B cell (primary cell): ENCODE measurements at regions of chr16 and their contacts with region 1.

Region 1: GRCh38 chr16:1929578-1930337 is 11.5 kb upstream of the HS3ST6 start:
- DNase-seq: peak; percentile 93
- ATAC-seq: peak; percentile 99
- H3K4me3 ChIP-seq: peak overlapping the region in 4 of 5 experiments; percentile 43 to 65 (median 58)
- H3K4me3 Mint-ChIP-seq: peak overlapping the region; percentile 71
- H3K27ac ChIP-seq: peak overlapping the region in 1 of 2 donors; percentile 27
- H3K27ac Mint-ChIP-seq: peak overlapping the region; percentile 70
- H3K4me1 ChIP-seq: peaks cover 4 to 10% of the 10 kb centered on the region in 2 donors
- H3K4me1 Mint-ChIP-seq: peaks cover 4% of the 10 kb centered on the region
- H3K27me3 ChIP-seq: peaks cover 0 to 8% (median 2%) of the 10 kb centered on the region in 4 experiments
- H3K27me3 Mint-ChIP-seq: peaks cover under 1% of the 10 kb centered on the region
- CTCF ChIP-seq: peak; percentile 95

Region 2: GRCh38 chr16:1656808-1657617 is 272.7 kb before region 1 on chr16:
- CTCF ChIA-PET with region 1: no interaction called
- POLR2A ChIA-PET with region 1: no interaction called
- intact Hi-C with region 1: no loop called
- DNase-seq: no peak
- ATAC-seq: no peak
- H3K4me3 ChIP-seq: no peak overlapping the region
- H3K4me3 Mint-ChIP-seq: no peak overlapping the region
- H3K27ac ChIP-seq: no peak overlapping the region
- H3K27ac Mint-ChIP-seq: no peak overlapping the region
- H3K4me1 ChIP-seq: no peaks in the 10 kb centered on the region
- H3K4me1 Mint-ChIP-seq: peaks cover 2% of the 10 kb centered on the region
- H3K27me3 ChIP-seq: no peaks in the 10 kb centered on the region
- H3K27me3 Mint-ChIP-seq: no peaks in the 10 kb centered on the region
- CTCF ChIP-seq: no peak

Region 3: DNA sequence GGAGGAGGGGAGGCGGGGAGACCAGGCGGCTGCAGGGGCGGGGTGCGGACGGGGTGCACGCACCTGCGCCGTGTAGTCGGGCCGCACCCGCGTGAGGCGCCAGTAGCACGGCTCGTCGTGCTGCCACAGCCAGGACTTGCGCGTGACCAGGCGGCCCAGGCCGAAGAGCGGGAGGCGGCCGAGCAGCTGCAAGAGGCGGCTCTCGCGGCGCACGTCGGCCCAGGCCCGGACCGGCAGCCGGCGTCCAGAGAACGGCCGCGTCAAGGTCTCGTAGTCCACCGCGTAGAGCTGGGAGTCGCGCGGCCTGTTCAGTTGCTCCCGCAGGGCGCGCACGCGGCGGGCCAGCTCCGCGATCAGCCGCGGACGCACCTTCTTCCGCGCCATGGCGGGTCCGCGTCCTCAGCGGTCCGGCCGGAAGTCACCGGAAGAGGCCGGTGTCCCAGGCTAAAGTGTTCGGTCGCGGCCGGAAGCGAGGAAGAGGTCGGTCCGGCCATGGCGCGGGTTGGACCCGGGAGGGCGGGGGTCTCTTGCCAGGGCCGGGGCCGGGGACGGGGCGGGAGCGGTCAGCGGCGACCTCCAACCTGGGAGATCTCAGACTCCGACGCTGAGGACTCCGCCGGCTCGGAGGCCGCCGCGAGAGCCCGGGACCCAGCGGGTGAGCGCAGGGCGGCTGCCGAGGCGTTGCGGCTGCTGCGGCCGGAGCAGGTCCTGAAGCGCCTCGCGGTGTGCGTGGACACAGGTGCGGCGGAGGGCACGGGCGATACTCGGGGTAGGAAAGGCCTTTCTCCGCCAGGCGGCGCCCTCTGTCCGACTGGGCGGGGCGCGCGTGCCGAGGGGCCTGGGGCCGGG is 156.8 kb before region 1 on chr16 and contains the starts of genes EME2 and MRPS34:
- CTCF ChIA-PET with region 1: no interaction called
- POLR2A ChIA-PET with region 1: interaction called, 3 read pairs
- intact Hi-C with region 1: loop called (anchors 5 kb)
- DNase-seq: peak; percentile 89
- ATAC-seq: peak; percentile 61
- H3K4me3 ChIP-seq: peak within 1 kb of the TSS; percentile 53 to 87 (median 82)
- H3K4me3 Mint-ChIP-seq: peak within 1 kb of the TSS; percentile 95
- H3K27ac ChIP-seq: peak within 1 kb of the TSS; percentile 38 to 90
- H3K27ac Mint-ChIP-seq: peak within 1 kb of the TSS; percentile 97
- H3K4me1 ChIP-seq: peaks cover 22 to 40% of the 10 kb centered on the region in 2 donors
- H3K4me1 Mint-ChIP-seq: peaks cover 27% of the 10 kb centered on the region
- H3K27me3 ChIP-seq: no peaks in the 10 kb centered on the region
- H3K27me3 Mint-ChIP-seq: no peaks in the 10 kb centered on the region
- CTCF ChIP-seq: peak; percentile 88
- total RNA-seq, gene EME2: 42.5 and 43.9 TPM in 2 replicates
- total RNA-seq, gene MRPS34: 44.6 and 54.5 TPM in 2 replicates

Region 4: GRCh38 chr16:1863681-1864460 is 65.9 kb before region 1 on chr16:
- CTCF ChIA-PET with region 1: interaction called, 14 read pairs
- POLR2A ChIA-PET with region 1: no interaction called
- intact Hi-C with region 1: no loop called
- DNase-seq: peak; percentile 59
- ATAC-seq: no peak
- H3K4me3 ChIP-seq: no peak overlapping the region
- H3K4me3 Mint-ChIP-seq: no peak overlapping the region
- H3K27ac ChIP-seq: no peak overlapping the region
- H3K27ac Mint-ChIP-seq: no peak overlapping the region
- H3K4me1 ChIP-seq: no peaks in the 10 kb centered on the region
- H3K4me1 Mint-ChIP-seq: no peaks in the 10 kb centered on the region
- H3K27me3 ChIP-seq: peaks cover 0 to 13% (median 7%) of the 10 kb centered on the region in 4 experiments
- H3K27me3 Mint-ChIP-seq: peaks cover 38% of the 10 kb centered on the region
- CTCF ChIP-seq: peak; percentile 82

Region 5: GRCh38 chr16:1942810-1943726 is 13.3 kb after region 1 on chr16 and contains the start of gene MSRB1:
- CTCF ChIA-PET with region 1: interaction called, 7 read pairs
- POLR2A ChIA-PET with region 1: interaction called, 5 read pairs
- intact Hi-C with region 1: loop called (anchors 1 kb)
- DNase-seq: peak; percentile 99
- ATAC-seq: peak; percentile 99
- H3K4me3 ChIP-seq: peak within 1 kb of the TSS; percentile 42 to 83 (median 73)
- H3K4me3 Mint-ChIP-seq: peak within 1 kb of the TSS; percentile 90
- H3K27ac ChIP-seq: peak within 1 kb of the TSS; percentile 25 to 64
- H3K27ac Mint-ChIP-seq: peak within 1 kb of the TSS; percentile 80
- H3K4me1 ChIP-seq: peaks cover 14 to 19% of the 10 kb centered on the region in 2 donors
- H3K4me1 Mint-ChIP-seq: peaks cover 21% of the 10 kb centered on the region
- H3K27me3 ChIP-seq: no peaks in the 10 kb centered on the region
- H3K27me3 Mint-ChIP-seq: no peaks in the 10 kb centered on the region
- CTCF ChIP-seq: no peak
- total RNA-seq, gene MSRB1: 15.2 and 17.5 TPM in 2 replicates

Region 6: GRCh38 chr16:1959269-1960049 is 29.7 kb after region 1 on chr16 and contains the start of gene NDUFB10:
- CTCF ChIA-PET with region 1: interaction called, 3 read pairs
- POLR2A ChIA-PET with region 1: no interaction called
- intact Hi-C with region 1: loop called (anchors 2 kb)
- DNase-seq: peak; percentile 93
- ATAC-seq: peak; percentile 94
- H3K4me3 ChIP-seq: peak within 1 kb of the TSS; percentile 51 to 89 (median 86)
- H3K4me3 Mint-ChIP-seq: peak within 1 kb of the TSS; percentile 89
- H3K27ac ChIP-seq: peak within 1 kb of the TSS; percentile 51 to 77
- H3K27ac Mint-ChIP-seq: peak within 1 kb of the TSS; percentile 89
- H3K4me1 ChIP-seq: peaks cover 24 to 47% of the 10 kb centered on the region in 2 donors
- H3K4me1 Mint-ChIP-seq: peaks cover 38% of the 10 kb centered on the region
- H3K27me3 ChIP-seq: no peaks in the 10 kb centered on the region
- H3K27me3 Mint-ChIP-seq: peaks cover 3% of the 10 kb centered on the region
- CTCF ChIP-seq: peak; percentile 80
- total RNA-seq, gene NDUFB10: 63.7 and 70.4 TPM in 2 replicates